ENCODE measurements at regions of chr9 and their contacts with region 1.

Region 1: DNA sequence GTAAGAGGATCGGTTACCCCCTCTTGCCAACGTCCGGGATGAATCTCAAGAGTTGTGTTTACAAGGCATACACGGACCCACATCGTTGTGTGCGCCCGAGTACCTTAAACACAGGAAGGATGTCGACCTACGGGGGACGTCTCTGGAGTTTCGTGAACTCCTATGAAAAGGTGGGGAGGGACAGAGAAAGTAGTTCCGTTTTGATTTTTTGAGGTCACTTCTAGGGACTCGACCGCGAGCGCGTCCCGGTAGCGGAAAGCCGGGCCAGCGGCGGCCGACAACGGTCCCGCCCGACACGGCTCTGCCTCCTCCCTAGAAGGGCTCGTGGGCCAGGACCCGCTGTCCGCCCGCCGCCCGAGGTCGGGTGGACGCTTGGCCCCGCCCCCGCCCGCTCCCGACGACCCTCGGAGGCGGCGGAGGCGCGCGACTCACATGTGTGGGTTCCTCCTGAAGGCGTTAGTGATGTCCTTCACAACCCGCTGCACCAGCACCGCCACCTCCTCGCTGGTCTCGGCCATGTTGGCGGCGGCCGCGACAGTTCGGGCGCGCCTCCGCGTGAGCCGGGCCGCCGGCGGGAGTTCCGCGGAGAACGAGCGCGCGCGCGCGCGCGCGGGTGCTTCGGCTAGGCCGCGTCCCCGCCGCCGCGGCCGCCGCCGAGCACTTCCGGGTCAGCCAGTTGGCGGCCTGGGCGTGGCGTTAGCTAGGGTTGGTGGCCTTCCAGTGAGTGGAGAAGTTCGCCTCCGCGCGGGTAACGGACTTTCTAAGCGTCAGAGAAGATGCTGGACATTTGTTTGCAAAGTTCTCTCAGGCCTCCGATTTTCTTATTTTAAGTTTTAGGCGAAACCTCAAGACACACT is at the start of gene PTAR1:
- DNase-seq: peak; percentile 90
- H3K4me3 Mint-ChIP-seq: peak within 1 kb of the TSS; percentile 95
- H3K27ac Mint-ChIP-seq: peak within 1 kb of the TSS; percentile 94
- H3K4me1 Mint-ChIP-seq: peaks cover 29% of the 10 kb centered on the region
- H3K27me3 Mint-ChIP-seq: no peaks in the 10 kb centered on the region
- total RNA-seq, gene PTAR1: 41.6 to 44.8 TPM

Region 2: GRCh38 chr9:69035438-69036308 is 724.0 kb before region 1 on chr9 and contains the start of gene FXN:
- CTCF ChIA-PET with region 1: no interaction called
- intact Hi-C with region 1: loop called (anchors 10 kb)
- DNase-seq: peak; percentile 86
- H3K4me3 Mint-ChIP-seq: peak within 1 kb of the TSS; percentile 95
- H3K27ac Mint-ChIP-seq: peak within 1 kb of the TSS; percentile 85
- H3K4me1 Mint-ChIP-seq: peaks cover 24% of the 10 kb centered on the region
- H3K27me3 Mint-ChIP-seq: no peaks in the 10 kb centered on the region
- total RNA-seq, gene FXN: 16.8 to 17.3 TPM

Region 3: DNA sequence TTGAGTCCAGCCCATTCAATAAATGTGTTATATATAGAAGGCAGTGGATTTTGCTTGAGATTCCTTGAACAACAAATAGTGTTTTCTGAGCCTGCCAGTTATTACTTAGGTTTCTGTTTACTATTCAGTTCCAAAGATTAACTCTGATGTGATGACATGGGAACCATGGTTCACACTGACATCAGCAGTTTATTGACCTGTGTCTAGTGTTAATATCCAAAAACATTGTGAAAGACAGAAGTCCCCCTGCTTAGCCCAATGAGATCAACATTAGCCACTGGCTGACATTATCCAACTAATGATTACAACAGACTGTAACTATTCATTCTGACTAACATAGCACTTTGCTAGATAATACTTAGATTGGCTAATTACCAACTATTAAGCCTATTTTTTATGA is 102.4 kb before region 1 on chr9:
- CTCF ChIA-PET with region 1: no interaction called
- intact Hi-C with region 1: no loop called
- DNase-seq: no peak
- H3K4me3 Mint-ChIP-seq: no peak overlapping the region
- H3K27ac Mint-ChIP-seq: no peak overlapping the region
- H3K4me1 Mint-ChIP-seq: no peaks in the 10 kb centered on the region
- H3K27me3 Mint-ChIP-seq: peaks cover 4% of the 10 kb centered on the region

Region 4: DNA sequence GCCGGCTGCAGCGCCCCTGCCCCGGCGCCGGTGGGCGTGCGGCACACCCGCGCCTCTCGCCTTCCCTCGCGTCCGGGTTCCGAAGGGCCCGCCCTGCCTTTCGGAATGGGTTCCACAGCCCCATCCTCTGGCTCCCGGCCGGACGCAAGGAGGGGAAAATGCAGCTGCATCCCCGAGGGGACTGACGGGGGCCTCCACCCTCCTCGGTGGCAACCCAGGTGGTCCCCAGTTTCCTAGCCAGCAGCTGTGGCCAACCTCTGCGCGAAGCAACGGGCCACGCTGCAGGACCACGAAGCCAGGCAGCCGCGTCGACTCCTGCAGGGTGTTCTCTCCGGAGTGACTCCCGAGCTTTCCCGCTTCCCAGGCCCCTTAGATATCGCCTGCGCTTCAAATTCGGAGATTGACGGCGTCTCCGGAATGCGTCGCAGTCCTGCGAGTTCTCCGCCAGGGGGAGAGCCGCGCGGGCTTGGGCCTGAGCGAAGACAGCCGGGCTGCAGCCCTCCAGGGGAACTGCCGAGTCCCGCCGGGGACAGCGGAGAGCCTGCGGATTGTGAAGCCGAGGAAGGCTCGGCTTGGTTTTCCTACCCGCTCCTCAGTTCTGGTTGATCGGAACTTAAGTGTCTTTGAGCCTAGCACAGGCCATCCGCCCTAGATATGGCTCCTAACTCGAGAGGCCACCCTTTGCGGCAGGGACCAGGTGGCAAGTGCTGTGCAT is 86.9 kb before region 1 on chr9:
- CTCF ChIA-PET with region 1: interaction called, 4 read pairs
- intact Hi-C with region 1: loop called (anchors 1 kb)
- DNase-seq: peak; percentile 81
- H3K4me3 Mint-ChIP-seq: peak overlapping the region; percentile 72
- H3K27ac Mint-ChIP-seq: no peak overlapping the region
- H3K4me1 Mint-ChIP-seq: peaks cover 9% of the 10 kb centered on the region
- H3K27me3 Mint-ChIP-seq: peaks cover 12% of the 10 kb centered on the region

Region 5: GRCh38 chr9:69718218-69718617 is 41.4 kb before region 1 on chr9:
- CTCF ChIA-PET with region 1: no interaction called
- intact Hi-C with region 1: no loop called
- DNase-seq: no peak
- H3K4me3 Mint-ChIP-seq: no peak overlapping the region
- H3K27ac Mint-ChIP-seq: no peak overlapping the region
- H3K4me1 Mint-ChIP-seq: no peaks in the 10 kb centered on the region
- H3K27me3 Mint-ChIP-seq: no peaks in the 10 kb centered on the region

Region 6: GRCh38 chr9:69731348-69731747 is 28.3 kb before region 1 on chr9:
- CTCF ChIA-PET with region 1: no interaction called
- intact Hi-C with region 1: no loop called
- DNase-seq: no peak
- H3K4me3 Mint-ChIP-seq: no peak overlapping the region
- H3K27ac Mint-ChIP-seq: no peak overlapping the region
- H3K4me1 Mint-ChIP-seq: peaks cover 4% of the 10 kb centered on the region
- H3K27me3 Mint-ChIP-seq: no peaks in the 10 kb centered on the region

Region 7: GRCh38 chr9:69822091-69822750 is 62.6 kb after region 1 on chr9:
- CTCF ChIA-PET with region 1: no interaction called
- intact Hi-C with region 1: loop called (anchors 2 kb)
- DNase-seq: no peak
- H3K4me3 Mint-ChIP-seq: no peak overlapping the region
- H3K27ac Mint-ChIP-seq: no peak overlapping the region
- H3K4me1 Mint-ChIP-seq: peaks cover 27% of the 10 kb centered on the region
- H3K27me3 Mint-ChIP-seq: peaks cover 19% of the 10 kb centered on the region

Region 8: DNA sequence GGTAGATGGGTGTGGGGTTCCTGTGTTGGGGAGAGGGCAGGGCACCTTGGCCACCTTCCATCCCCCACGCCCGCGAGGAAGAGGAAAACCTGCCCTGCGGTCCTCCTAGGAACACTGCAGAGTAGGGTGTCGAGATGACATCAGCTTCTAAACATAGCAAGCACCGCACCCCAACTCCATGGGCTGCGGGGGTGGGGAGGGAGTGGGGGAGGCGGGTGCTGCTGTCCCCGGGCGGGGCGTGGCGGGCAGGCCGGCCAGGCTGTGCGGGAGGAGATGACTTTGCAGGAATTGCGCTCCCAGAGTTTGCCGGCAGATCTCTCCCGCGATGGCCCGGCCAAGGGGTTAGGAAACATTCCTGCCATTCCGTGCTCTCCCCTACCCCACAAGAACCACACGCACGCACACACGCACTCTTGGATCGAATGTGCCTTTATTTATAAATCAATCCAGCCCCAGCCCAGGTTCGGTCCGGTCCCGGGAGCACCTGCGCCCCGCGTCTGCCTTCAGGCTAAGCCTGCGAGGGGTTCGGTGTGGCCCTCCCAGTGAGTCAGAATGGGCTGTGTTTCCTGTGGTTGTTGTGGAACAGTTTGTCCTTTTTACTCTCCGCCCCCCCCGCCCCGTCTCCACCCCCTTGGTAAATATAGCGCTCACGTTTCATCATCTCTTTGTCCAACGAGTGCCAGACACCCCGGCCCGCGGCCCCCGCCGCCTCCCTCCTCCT is 660.1 kb after region 1 on chr9:
- CTCF ChIA-PET with region 1: no interaction called
- intact Hi-C with region 1: loop called (anchors 5 kb)
- DNase-seq: peak; percentile 94
- H3K4me3 Mint-ChIP-seq: peak overlapping the region; percentile 96
- H3K27ac Mint-ChIP-seq: peak overlapping the region; percentile 100
- H3K4me1 Mint-ChIP-seq: peaks cover 47% of the 10 kb centered on the region
- H3K27me3 Mint-ChIP-seq: no peaks in the 10 kb centered on the region